Activated CD4-positive, alpha-beta memory T cell treated with anti-CD3 and anti-CD28 coated beads, Interleukin-2, amount 10 ng/mL, durations not matched to agents 7 days and 5 days (primary cell): ENCODE measurements at regions of chr7 and their contacts with region 1.

Region 1: GRCh38 chr7:23020742-23021401 is 6.9 kb upstream of the HYCC1 start:
- DNase-seq: peak; percentile 36
- H3K4me3 Mint-ChIP-seq: no peak overlapping the region
- H3K27ac Mint-ChIP-seq: peak overlapping the region; percentile 87
- H3K4me1 Mint-ChIP-seq: peaks cover 61% of the 10 kb centered on the region
- H3K27me3 Mint-ChIP-seq: peaks cover 13% of the 10 kb centered on the region

Region 2: GRCh38 chr7:22992874-22993840 is 27.7 kb before region 1 on chr7:
- CTCF ChIA-PET with region 1: no interaction called
- POLR2A ChIA-PET with region 1: interaction called, 28 read pairs
- DNase-seq: peak; percentile 49
- H3K4me3 Mint-ChIP-seq: no peak overlapping the region
- H3K27ac Mint-ChIP-seq: peak overlapping the region; percentile 40
- H3K4me1 Mint-ChIP-seq: peaks cover 67% of the 10 kb centered on the region
- H3K27me3 Mint-ChIP-seq: no peaks in the 10 kb centered on the region

Region 3: GRCh38 chr7:24172856-24173255 is 1152.0 kb after region 1 on chr7:
- CTCF ChIA-PET with region 1: no interaction called
- POLR2A ChIA-PET with region 1: no interaction called
- DNase-seq: no peak
- H3K4me3 Mint-ChIP-seq: no peak overlapping the region
- H3K27ac Mint-ChIP-seq: no peak overlapping the region
- H3K4me1 Mint-ChIP-seq: no peaks in the 10 kb centered on the region
- H3K27me3 Mint-ChIP-seq: peaks cover 2% of the 10 kb centered on the region